PC-3 (cell line): ENCODE measurements at regions of chr1 and their contacts with region 1.

Region 1: GRCh38 chr1:232630047-232630893 is at the start of gene SIPA1L2:
- DNase-seq: peak; percentile 97
- ATAC-seq: peak; percentile 88
- H3K4me3 ChIP-seq: peak within 1 kb of the TSS; percentile 77
- H3K27ac ChIP-seq: peak within 1 kb of the TSS; percentile 30
- H3K4me1 ChIP-seq: peaks cover 34% of the 10 kb centered on the region
- H3K27me3 ChIP-seq: no peaks in the 10 kb centered on the region
- CTCF ChIP-seq: peak; percentile 83
- total RNA-seq, gene SIPA1L2: 8.9 and 9.8 TPM in 2 replicates

Region 2: DNA sequence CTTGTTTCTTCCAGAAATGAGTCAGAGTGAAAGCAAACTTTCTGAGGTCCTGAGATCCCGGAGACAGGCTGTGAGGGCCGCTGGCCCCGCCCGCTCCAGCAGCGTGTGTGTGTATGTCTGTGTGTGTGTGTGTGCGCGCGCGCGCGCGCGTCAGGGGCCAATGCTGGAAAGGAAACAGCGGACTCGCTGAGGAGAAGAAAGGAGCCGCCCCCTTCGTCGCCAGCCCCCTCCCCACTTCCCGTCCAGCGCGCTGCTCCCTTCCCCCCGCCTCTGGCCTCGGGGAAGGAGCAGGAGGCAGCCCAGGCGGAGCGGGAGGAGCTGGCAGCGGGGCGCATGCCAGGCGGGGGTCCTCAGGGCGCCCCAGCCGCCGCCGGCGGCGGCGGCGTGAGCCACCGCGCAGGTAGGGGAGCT is 1003.7 kb before region 1 on chr1 and contains the start of gene DISC1:
- CTCF ChIA-PET with region 1: no interaction called
- POLR2A ChIA-PET with region 1: no interaction called
- intact Hi-C with region 1: loop called (anchors 2 kb)
- DNase-seq: peak; percentile 97
- ATAC-seq: peak; percentile 77
- H3K4me3 ChIP-seq: peak within 1 kb of the TSS; percentile 79
- H3K27ac ChIP-seq: no peak within 1 kb of the TSS
- H3K4me1 ChIP-seq: peaks cover 22% of the 10 kb centered on the region
- H3K27me3 ChIP-seq: no peaks in the 10 kb centered on the region; the same call in 1 of the 2 replicates
- CTCF ChIP-seq: no peak
- total RNA-seq, gene DISC1: 3.4 and 5.1 TPM in 2 replicates

Region 3: DNA sequence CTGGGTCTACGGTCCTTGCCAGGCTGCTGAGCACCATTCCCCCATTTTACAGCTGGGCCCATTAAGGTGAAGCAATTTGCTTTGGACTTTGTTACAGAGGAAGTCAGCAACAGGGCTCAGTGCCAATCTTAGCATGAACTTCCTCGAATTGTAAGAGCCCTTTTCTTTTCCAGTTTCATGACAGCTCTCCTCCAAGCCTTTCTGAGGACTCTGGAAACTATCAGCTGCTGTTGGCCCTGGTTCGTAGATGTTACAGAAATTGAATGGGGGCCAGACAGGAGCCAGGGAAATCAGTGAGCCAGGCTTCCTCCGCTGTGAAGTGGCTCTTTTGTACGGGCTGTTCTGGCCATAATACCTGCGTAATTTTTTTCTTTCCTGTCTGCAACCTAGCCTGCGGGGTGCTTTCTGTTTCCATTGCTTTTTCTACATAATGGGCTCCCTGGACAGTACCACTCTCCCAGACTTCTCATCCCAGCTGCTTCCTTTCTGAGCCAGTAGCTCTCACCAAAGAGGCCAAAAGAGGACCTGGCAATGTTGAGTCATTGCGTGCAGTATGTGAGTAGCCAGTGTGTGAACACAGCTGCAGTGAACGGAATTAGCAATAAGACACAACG is 617.4 kb before region 1 on chr1:
- CTCF ChIA-PET with region 1: no interaction called
- POLR2A ChIA-PET with region 1: no interaction called
- intact Hi-C with region 1: loop called (anchors 10 kb)
- DNase-seq: no peak
- ATAC-seq: no peak
- H3K4me3 ChIP-seq: no peak overlapping the region
- H3K27ac ChIP-seq: no peak overlapping the region
- H3K4me1 ChIP-seq: no peaks in the 10 kb centered on the region
- H3K27me3 ChIP-seq: no peaks in the 10 kb centered on the region
- CTCF ChIP-seq: no peak

Region 4: GRCh38 chr1:232226197-232226712 is 404.0 kb before region 1 on chr1:
- CTCF ChIA-PET with region 1: interaction called, 5 read pairs
- POLR2A ChIA-PET with region 1: no interaction called
- intact Hi-C with region 1: loop called (anchors 2 kb)
- DNase-seq: peak; percentile 97
- ATAC-seq: peak; percentile 64
- H3K4me3 ChIP-seq: peak overlapping the region; percentile 25; the same call in 1 of the 2 replicates
- H3K27ac ChIP-seq: peak overlapping the region; percentile 62
- H3K4me1 ChIP-seq: peaks cover 50% of the 10 kb centered on the region
- H3K27me3 ChIP-seq: no peaks in the 10 kb centered on the region
- CTCF ChIP-seq: no peak

Region 5: DNA sequence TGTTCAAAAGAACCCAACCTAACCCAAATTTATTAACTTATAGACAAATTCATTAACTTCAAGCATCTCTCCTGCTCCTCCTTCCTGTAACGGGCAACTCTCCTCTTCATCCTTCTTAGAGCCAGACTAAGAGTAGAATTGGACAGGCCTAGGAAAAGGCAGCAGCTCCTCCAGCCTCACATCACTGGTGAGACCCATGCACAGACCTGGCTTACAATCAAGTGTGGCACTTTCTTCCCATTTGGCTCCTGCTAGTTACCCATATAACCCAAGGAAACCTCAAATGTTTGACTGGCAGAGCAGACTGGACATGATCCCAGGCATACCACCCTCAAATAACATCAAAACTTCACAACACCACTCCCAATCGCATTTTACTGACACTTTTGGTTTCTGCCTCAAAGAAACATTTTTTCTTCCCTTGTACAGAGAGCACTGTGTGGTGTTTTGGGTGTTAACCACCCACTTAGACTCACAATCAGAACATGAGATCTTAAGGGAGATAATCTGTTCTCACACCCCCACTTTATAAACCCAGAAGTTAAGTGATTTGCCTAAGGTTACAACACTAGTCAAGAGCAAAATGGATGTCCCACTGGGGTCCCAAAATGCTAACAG is 101.7 kb before region 1 on chr1:
- CTCF ChIA-PET with region 1: interaction called, 5 read pairs
- POLR2A ChIA-PET with region 1: no interaction called
- intact Hi-C with region 1: loop called (anchors 1 kb)
- DNase-seq: no peak
- ATAC-seq: no peak
- H3K4me3 ChIP-seq: no peak overlapping the region
- H3K27ac ChIP-seq: peak overlapping the region; percentile 81
- H3K4me1 ChIP-seq: peaks cover 29% of the 10 kb centered on the region
- H3K27me3 ChIP-seq: no peaks in the 10 kb centered on the region
- CTCF ChIP-seq: no peak

Region 6: DNA sequence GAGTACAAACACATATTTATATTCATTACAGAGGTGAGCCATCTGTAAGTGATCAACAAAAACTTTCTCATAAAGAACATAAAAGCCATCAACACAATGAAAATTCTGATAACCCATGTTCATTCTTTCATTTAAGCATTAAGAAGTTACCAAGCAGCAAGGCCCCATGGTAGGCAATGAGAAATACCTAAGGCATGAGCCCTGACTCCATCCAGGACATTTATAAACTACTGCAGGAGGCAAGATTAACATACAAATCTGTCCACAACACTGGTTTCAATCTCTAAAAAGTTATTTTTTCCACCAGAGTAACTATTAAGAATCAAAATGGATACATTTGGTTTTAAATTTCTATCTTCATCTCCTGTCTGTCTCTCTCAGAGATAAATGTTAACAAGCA is 76.5 kb before region 1 on chr1:
- CTCF ChIA-PET with region 1: no interaction called
- POLR2A ChIA-PET with region 1: no interaction called
- intact Hi-C with region 1: no loop called
- DNase-seq: no peak
- ATAC-seq: no peak
- H3K4me3 ChIP-seq: no peak overlapping the region
- H3K27ac ChIP-seq: no peak overlapping the region
- H3K4me1 ChIP-seq: no peaks in the 10 kb centered on the region
- H3K27me3 ChIP-seq: no peaks in the 10 kb centered on the region
- CTCF ChIP-seq: no peak

Region 7: GRCh38 chr1:233078396-233078795 is 448.1 kb after region 1 on chr1:
- CTCF ChIA-PET with region 1: no interaction called
- POLR2A ChIA-PET with region 1: no interaction called
- intact Hi-C with region 1: loop called (anchors 10 kb)
- DNase-seq: no peak
- ATAC-seq: no peak
- H3K4me3 ChIP-seq: no peak overlapping the region
- H3K27ac ChIP-seq: no peak overlapping the region
- H3K4me1 ChIP-seq: peaks cover 46% of the 10 kb centered on the region
- H3K27me3 ChIP-seq: no peaks in the 10 kb centered on the region
- CTCF ChIP-seq: no peak